ENCODE measurements at regions of chr3 and their contacts with region 1.

Region 1: GRCh38 chr3:32960404-32961170 is 9.1 kb downstream of the CCR4 start:
- DNase-seq: no peak
- ATAC-seq: no peak
- H3K4me3 ChIP-seq: no peak overlapping the region
- H3K4me3 Mint-ChIP-seq: peak overlapping the region in 4 of 10 donors; percentile 7 to 62 (median 36)
- H3K27ac ChIP-seq: no peak overlapping the region
- H3K27ac Mint-ChIP-seq: peak overlapping the region in 7 of 9 donors; percentile 31 to 92 (median 81)
- H3K4me1 ChIP-seq: peaks cover 11 to 21% of the 10 kb centered on the region in 2 donors
- H3K4me1 Mint-ChIP-seq: peaks cover 11 to 44% (median 22%) of the 10 kb centered on the region in 7 donors
- H3K27me3 ChIP-seq: no peaks in the 10 kb centered on the region
- H3K27me3 Mint-ChIP-seq: peaks cover 0 to 3% (median 0%) of the 10 kb centered on the region in 5 donors

Region 2: DNA sequence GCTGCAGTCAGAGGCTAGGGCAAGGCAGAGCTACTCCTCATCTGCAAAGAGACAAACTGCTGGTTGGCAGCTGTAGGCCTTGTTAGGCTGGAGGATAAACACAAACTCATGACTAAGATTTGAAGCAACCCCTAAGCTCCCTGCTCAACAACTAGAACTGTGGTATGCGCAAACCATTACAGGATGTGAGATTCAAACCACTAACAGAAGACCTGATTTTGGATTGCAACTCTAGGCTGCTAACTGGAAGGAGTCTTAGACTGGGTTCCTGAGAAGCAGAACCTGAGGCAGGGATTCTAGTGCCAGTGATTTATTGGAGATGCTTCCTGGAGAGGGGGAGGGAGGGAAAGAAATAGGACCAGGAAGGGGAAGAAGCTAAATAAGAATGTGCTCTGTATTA is 13.4 kb after region 1 on chr3:
- CTCF ChIA-PET with region 1: no interaction called
- POLR2A ChIA-PET with region 1: no interaction called
- intact Hi-C with region 1: loop called in 1 of 2 experiments (anchors 1 kb)
- DNase-seq: peak in 3 of 9 donors; percentile 11 to 47 (median 32)
- ATAC-seq: peak; percentile 64
- H3K4me3 ChIP-seq: no peak overlapping the region
- H3K4me3 Mint-ChIP-seq: peak overlapping the region in 1 of 10 donors; percentile 66
- H3K27ac ChIP-seq: no peak overlapping the region
- H3K27ac Mint-ChIP-seq: peak overlapping the region in 1 of 9 donors; percentile 77
- H3K4me1 ChIP-seq: peaks cover 6 to 39% of the 10 kb centered on the region in 2 donors
- H3K4me1 Mint-ChIP-seq: peaks cover 0 to 52% (median 7%) of the 10 kb centered on the region in 7 donors
- H3K27me3 ChIP-seq: no peaks in the 10 kb centered on the region
- H3K27me3 Mint-ChIP-seq: no peaks in the 10 kb centered on the region